ENCODE measurements at regions of chr2 and their contacts with region 1.

Region 1: GRCh38 chr2:237603718-237604362 is 13.3 kb upstream of the RAB17 start:
- DNase-seq: peak; percentile 94 to 96 (median 95)
- H3K4me3 ChIP-seq: peak overlapping the region in 5 of 7 experiments; percentile 7 to 55 (median 36)
- H3K27ac ChIP-seq: peak overlapping the region; percentile 67 to 84
- H3K4me1 ChIP-seq: peaks cover 6 to 29% (median 29%) of the 10 kb centered on the region in 4 experiments
- H3K27me3 ChIP-seq: no peaks in the 10 kb centered on the region

Region 2: GRCh38 chr2:237581751-237582746 is 21.8 kb before region 1 on chr2:
- CTCF ChIA-PET with region 1: interaction called, 25 read pairs
- POLR2A ChIA-PET with region 1: no interaction called
- DNase-seq: peak; percentile 85 to 92 (median 92)
- H3K4me3 ChIP-seq: peak overlapping the region in 1 of 7 experiments; percentile 46
- H3K27ac ChIP-seq: no peak overlapping the region
- H3K4me1 ChIP-seq: peaks cover 0 to 12% (median 8%) of the 10 kb centered on the region in 4 experiments
- H3K27me3 ChIP-seq: no peaks in the 10 kb centered on the region

Region 3: DNA sequence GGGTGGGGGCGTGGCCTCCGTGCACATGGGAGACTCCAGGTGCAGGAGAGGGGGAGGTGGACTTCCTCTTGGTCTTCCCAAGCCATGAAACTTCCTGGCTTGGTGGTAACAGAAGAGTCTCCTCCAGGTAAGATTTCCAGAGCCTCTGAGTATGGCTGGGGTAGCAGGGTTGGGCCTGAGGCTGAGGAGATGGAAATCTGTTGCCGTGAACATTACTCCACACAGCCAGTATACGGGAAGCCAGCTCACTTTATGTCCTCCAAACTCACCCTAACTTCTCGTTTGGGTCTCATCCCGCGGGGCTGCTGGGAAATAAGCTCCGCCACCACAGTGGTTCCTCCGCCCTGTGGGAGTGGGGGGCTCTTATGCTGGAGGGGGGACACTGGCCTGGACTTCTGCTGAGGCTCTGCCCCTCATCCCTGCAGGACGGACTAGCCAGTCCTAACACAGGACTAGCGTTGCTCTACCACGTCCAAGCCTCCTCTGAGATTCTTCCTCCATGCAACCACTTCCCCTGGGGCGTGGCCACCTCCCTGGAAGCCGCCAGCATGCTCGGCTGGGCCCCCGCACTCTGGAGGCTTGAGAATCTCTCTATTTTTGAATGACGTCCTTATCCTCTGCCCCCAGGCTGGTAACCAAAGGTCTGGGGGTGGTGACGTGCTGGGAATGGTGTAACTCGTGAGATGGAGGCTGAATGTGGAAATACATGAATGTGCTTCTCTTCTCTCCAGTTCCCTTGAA is 12.5 kb before region 1 on chr2:
- CTCF ChIA-PET with region 1: interaction called, 25 read pairs
- POLR2A ChIA-PET with region 1: interaction called, 5 read pairs
- DNase-seq: peak in 2 of 3 donors; percentile 61 to 72
- H3K4me3 ChIP-seq: peak overlapping the region in 1 of 7 experiments; percentile 26
- H3K27ac ChIP-seq: no peak overlapping the region
- H3K4me1 ChIP-seq: peaks cover 2 to 11% (median 8%) of the 10 kb centered on the region in 4 experiments
- H3K27me3 ChIP-seq: no peaks in the 10 kb centered on the region

Region 4: GRCh38 chr2:237616734-237617586 is 13.1 kb after region 1 on chr2:
- CTCF ChIA-PET with region 1: interaction called, 18 read pairs
- POLR2A ChIA-PET with region 1: interaction called, 4 read pairs
- DNase-seq: peak; percentile 88 to 97 (median 94)
- H3K4me3 ChIP-seq: peak overlapping the region in 3 of 7 experiments; percentile 21 to 62 (median 29)
- H3K27ac ChIP-seq: no peak overlapping the region
- H3K4me1 ChIP-seq: peaks cover 31 to 58% (median 52%) of the 10 kb centered on the region in 4 experiments
- H3K27me3 ChIP-seq: no peaks in the 10 kb centered on the region

Region 5: DNA sequence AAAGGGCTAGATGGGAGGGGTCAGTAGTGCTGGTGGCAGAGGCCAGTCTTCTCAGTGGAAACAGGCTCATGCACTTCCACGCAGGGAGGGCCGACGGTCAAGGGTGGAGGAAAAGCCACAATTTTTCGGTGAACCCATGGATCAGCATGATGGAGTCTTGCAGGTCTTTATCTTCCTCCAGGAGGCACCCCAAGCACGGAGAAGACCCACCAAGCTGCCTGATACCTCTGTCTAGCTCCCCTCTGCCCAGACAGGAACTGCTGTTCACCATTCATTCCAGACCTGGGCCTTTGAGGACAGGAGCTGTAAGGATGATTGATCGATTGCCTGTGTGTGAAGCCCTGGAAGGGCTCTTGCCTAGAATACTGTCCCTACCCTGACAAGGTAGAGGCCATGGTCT is 20.7 kb after region 1 on chr2:
- CTCF ChIA-PET with region 1: interaction called, 18 read pairs
- POLR2A ChIA-PET with region 1: no interaction called
- DNase-seq: no peak
- H3K4me3 ChIP-seq: no peak overlapping the region
- H3K27ac ChIP-seq: no peak overlapping the region
- H3K4me1 ChIP-seq: peaks cover 7 to 19% (median 14%) of the 10 kb centered on the region in 4 experiments
- H3K27me3 ChIP-seq: peaks cover 4 to 10% (median 6%) of the 10 kb centered on the region in 5 experiments

Region 6: DNA sequence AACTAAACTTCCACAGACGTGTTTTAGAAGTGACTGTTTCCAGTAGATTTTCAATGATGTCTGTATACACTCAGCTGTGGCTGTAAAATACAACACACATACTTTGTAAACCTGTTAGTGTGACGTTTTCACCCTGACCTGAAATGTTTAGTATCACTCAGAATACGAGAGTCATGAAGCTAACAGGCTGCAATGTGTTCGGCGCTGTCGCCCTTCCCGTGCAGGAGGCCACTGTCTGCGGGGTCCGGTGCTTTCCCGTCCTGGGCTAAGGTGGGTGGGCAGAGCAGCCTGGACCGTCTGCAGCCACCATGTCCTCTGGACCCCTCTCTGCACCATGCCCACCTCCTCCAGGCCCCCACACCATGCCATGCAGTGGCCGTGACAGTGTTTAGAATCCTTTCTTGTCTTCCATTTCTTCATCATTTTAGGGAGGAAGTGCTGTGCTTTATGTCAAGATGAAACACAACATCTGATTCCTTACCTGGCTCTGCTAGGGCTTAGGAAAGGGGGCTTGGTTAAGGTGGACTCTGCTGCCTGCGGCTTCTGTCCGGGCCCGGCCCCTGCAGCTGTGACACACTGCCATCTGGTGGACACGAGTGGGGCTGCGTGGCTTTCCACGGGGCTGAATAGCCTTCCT is 140.9 kb after region 1 on chr2:
- CTCF ChIA-PET with region 1: interaction called, 13 read pairs
- POLR2A ChIA-PET with region 1: no interaction called
- DNase-seq: peak; percentile 60 to 72 (median 68)
- H3K4me3 ChIP-seq: no peak overlapping the region
- H3K27ac ChIP-seq: no peak overlapping the region
- H3K4me1 ChIP-seq: peaks cover 0 to 28% (median 9%) of the 10 kb centered on the region in 4 experiments
- H3K27me3 ChIP-seq: no peaks in the 10 kb centered on the region